ENCODE measurements at regions of chr18 and their contacts with region 1.

Region 1: DNA sequence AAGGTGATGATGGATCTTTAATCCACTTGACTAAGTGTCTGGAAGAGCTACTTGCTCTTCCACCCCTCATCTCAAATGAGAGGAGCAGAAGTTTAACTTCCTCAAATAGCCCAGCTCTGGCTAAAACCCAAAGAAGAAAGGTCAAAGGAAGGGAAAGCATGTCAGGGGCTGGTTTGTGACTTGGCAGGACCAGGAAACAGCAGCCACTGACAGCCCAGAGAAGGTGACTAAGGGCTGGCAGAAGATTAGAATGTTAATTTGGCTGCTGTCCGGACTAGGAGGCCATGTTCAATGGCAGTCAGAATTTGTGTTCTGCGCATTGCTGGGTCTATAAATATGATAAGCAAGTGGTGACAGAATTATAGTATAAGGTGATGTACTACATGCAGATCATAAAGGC is 386.2 kb downstream of the SETBP1 start:
- DNase-seq: no peak
- H3K4me3 ChIP-seq: no peak overlapping the region
- H3K27ac ChIP-seq: no peak overlapping the region
- H3K4me1 ChIP-seq: no peaks in the 10 kb centered on the region
- H3K27me3 ChIP-seq: no peaks in the 10 kb centered on the region
- CTCF ChIP-seq: no peak
- POLR2A ChIP-seq: no peak

Region 2: GRCh38 chr18:43751203-43751602 is 1315.7 kb before region 1 on chr18:
- intact Hi-C with region 1: no loop called
- DNase-seq: no peak
- H3K4me3 ChIP-seq: no peak overlapping the region
- H3K27ac ChIP-seq: no peak overlapping the region
- H3K4me1 ChIP-seq: no peaks in the 10 kb centered on the region
- H3K27me3 ChIP-seq: no peaks in the 10 kb centered on the region
- CTCF ChIP-seq: no peak
- POLR2A ChIP-seq: no peak

Region 3: GRCh38 chr18:44996261-44996660 is 70.6 kb before region 1 on chr18:
- intact Hi-C with region 1: no loop called
- DNase-seq: no peak
- H3K4me3 ChIP-seq: no peak overlapping the region
- H3K27ac ChIP-seq: no peak overlapping the region
- H3K4me1 ChIP-seq: no peaks in the 10 kb centered on the region
- H3K27me3 ChIP-seq: no peaks in the 10 kb centered on the region
- CTCF ChIP-seq: no peak
- POLR2A ChIP-seq: no peak

Region 4: GRCh38 chr18:45110577-45111501 is 44.0 kb after region 1 on chr18:
- intact Hi-C with region 1: no loop called
- DNase-seq: peak in 1 of 2 donors; percentile 23
- H3K4me3 ChIP-seq: no peak overlapping the region
- H3K27ac ChIP-seq: peak overlapping the region in 1 of 2 donors; percentile 66
- H3K4me1 ChIP-seq: no peaks in the 10 kb centered on the region
- H3K27me3 ChIP-seq: no peaks in the 10 kb centered on the region
- CTCF ChIP-seq: no peak
- POLR2A ChIP-seq: no peak

Region 5: GRCh38 chr18:45637546-45638327 is 570.9 kb after region 1 on chr18:
- intact Hi-C with region 1: loop called (anchors 5 kb)
- DNase-seq: no peak
- H3K4me3 ChIP-seq: no peak overlapping the region
- H3K27ac ChIP-seq: peak overlapping the region; percentile 43 to 65
- H3K4me1 ChIP-seq: no peaks in the 10 kb centered on the region
- H3K27me3 ChIP-seq: no peaks in the 10 kb centered on the region
- CTCF ChIP-seq: no peak
- POLR2A ChIP-seq: no peak

Measured in breast epithelium (tissue), 4 donors.